Endothelial cell of umbilical vein (primary cell): ENCODE measurements at regions of chr7 and their contacts with region 1.

Region 1: GRCh38 chr7:30504347-30505173 is at the start of gene GGCT:
- DNase-seq: peak; percentile 99
- H3K4me3 ChIP-seq: peak within 1 kb of the TSS; percentile 76 to 83 (median 78)
- H3K27ac ChIP-seq: peak within 1 kb of the TSS; percentile 54
- H3K4me1 ChIP-seq: peaks cover 15% of the 10 kb centered on the region
- H3K27me3 ChIP-seq: no peaks in the 10 kb centered on the region
- CTCF ChIP-seq: no peak
- POLR2A ChIP-seq: peak; percentile 93
- total RNA-seq, gene GGCT: 44.3 and 46.9 TPM in 2 replicates

Region 2: DNA sequence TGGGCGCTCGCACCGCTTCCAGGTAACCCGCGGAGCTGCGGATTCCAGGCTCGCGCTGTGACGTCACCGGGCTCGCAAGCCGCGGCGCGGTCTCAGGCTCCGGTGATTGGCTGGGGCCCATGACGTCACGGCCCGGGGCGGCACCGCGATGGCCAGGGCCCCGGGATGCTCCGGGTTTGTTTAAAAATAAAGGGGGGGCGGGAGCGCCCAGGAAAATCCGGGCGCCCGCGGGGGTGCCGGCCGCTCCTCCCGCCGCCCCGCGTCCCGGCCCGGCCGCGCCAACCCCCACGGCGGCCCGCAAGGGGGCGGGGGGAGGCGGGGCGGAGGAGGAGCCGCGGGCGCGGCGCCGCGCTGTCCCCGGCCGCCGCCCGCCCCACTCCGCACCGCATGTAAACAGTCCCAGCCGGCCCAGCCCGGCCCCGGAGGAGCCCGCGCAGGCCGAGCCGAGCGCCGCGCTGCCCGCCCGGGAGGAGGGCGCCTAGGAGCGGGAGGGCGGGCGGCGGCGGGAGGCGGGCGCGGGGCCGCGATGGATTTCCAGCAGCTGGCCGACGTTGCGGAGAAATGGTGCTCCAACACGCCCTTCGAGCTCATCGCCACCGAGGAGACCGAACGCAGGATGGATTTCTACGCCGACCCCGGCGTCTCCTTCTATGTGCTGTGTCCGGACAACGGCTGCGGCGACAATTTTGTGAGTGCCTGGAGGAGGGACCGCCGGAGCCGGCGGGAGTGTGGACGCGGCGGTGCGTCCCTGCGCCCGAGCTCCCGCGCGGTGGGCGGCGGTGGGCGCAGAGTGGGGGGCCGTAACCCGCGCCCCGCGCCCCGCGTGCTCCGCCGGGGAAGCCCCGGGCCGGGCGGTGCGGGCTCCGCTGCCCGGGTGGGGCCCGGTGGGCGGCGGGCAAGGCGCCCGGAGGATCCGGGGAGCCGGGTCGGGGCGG is 369.7 kb before region 1 on chr7 and contains the start of gene MTURN:
- CTCF ChIA-PET with region 1: no interaction called
- POLR2A ChIA-PET with region 1: no interaction called
- dilution Hi-C with region 1: no loop called
- intact Hi-C with region 1: loop called (anchors 1 kb)
- DNase-seq: peak; percentile 75
- H3K4me3 ChIP-seq: peak within 1 kb of the TSS; percentile 59 to 83 (median 59)
- H3K27ac ChIP-seq: peak within 1 kb of the TSS; percentile 41
- H3K4me1 ChIP-seq: peaks cover 6% of the 10 kb centered on the region
- H3K27me3 ChIP-seq: peaks cover 0 to 4% of the 10 kb centered on the region in 2 experiments
- CTCF ChIP-seq: no peak
- POLR2A ChIP-seq: no peak
- total RNA-seq, gene MTURN: 4.8 and 6.6 TPM in 2 replicates

Region 3: DNA sequence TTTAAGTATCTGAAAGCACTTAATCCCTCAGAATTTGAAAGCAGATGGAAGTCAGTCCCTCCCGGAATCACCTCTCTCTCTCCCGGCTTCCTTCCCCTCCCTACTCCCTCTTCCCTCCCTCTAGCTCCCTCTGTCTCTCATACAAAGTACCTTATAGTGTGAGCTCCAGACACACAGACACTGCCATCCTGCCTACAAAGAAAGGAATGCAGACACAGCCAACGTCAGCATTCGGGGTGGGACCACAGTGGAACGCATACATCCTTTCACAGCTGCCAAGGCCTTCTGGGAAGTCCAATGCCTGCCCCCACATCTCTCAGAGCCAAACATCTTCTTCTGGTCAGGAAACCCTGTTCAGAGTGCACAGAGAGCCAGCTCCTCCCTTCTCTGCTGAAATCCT is 35.3 kb before region 1 on chr7:
- CTCF ChIA-PET with region 1: interaction called, 5 read pairs
- POLR2A ChIA-PET with region 1: no interaction called
- dilution Hi-C with region 1: no loop called
- intact Hi-C with region 1: loop called (anchors 2 kb)
- DNase-seq: peak; percentile 99
- H3K4me3 ChIP-seq: no peak overlapping the region
- H3K27ac ChIP-seq: peak overlapping the region; percentile 93
- H3K4me1 ChIP-seq: peaks cover 60% of the 10 kb centered on the region
- H3K27me3 ChIP-seq: no peaks in the 10 kb centered on the region
- CTCF ChIP-seq: peak; percentile 49 to 52
- POLR2A ChIP-seq: peak; percentile 43

Region 4: DNA sequence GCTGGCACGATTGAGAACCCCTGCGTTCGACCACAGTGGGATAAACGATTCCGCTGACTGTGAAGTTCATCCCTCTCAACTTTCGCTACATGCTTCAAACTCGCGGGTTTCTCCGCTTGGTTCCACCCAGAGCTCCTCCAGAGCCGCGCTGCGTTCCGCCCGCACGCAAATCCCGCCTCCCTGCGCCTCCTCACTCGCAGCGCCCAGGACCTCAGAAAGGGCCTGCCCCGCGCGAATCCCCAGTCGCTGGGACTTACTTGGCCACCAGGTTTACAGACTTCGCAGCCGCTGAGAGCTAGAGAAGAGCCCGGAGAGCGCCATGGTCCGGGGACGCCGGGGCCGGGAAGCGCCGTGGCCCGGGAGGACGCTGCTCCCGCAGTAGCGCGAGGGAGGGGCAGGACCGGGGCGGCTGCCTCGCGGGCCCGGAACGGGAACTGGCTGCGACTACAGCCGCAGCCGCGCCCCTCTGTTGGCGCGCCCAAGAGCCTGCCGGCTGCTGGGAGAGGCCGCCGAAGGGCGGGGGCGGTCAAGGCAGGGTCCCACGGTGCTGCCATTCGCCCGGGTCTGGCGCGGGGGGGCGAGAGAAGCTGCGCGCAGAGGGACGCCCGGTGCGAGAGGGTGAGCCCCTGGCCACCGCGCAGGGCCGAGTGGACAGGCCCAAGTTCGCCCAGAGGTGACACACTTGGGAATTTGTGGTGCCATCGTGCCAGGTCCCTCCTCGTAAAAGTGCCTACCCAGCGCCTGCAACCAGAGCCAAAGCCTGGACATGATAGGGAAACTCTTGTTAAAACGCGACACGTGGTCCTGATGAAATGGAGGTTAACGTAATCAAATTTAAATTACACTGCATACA is 26.0 kb before region 1 on chr7 and contains the start of gene NOD1:
- CTCF ChIA-PET with region 1: interaction called, 4 read pairs
- POLR2A ChIA-PET with region 1: no interaction called
- dilution Hi-C with region 1: no loop called
- intact Hi-C with region 1: loop called (anchors 1 kb)
- DNase-seq: peak; percentile 81
- H3K4me3 ChIP-seq: peak within 1 kb of the TSS; percentile 60 to 92 (median 79)
- H3K27ac ChIP-seq: peak within 1 kb of the TSS; percentile 99
- H3K4me1 ChIP-seq: peaks cover 38% of the 10 kb centered on the region
- H3K27me3 ChIP-seq: no peaks in the 10 kb centered on the region
- CTCF ChIP-seq: no peak
- POLR2A ChIP-seq: no peak
- total RNA-seq, gene NOD1: 39.2 and 39.7 TPM in 2 replicates

Region 5: DNA sequence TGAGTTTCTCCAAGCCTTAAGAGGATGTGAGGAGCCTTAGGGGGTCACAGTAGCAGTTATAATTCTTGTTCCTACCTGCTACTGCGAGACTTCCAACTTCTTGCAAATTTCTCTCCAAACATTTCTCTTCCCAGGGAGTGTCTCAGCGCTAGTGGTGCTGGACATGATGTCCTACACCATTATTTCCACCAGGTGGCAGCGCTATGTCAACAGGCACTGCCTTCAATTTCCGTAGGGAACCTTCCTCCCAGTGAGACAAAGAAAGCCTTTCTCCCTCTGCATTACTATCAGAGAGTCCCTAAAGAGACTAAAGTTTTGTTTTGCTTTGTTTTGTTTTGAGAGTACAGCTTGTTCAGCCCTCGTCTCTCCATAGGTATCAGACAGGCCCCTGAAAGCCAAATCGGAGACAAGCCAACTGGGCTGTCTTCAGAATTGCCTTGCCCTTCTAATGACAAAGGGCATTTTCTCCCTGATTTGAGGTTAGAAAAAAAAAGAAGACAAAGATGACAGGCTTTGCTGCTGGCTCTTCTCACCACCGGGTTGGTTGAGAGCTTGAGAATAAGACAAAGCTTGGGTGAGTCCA is 44.3 kb after region 1 on chr7:
- CTCF ChIA-PET with region 1: interaction called, 6 read pairs
- POLR2A ChIA-PET with region 1: interaction called, 9 read pairs
- dilution Hi-C with region 1: no loop called
- intact Hi-C with region 1: loop called (anchors 1 kb)
- DNase-seq: peak; percentile 82
- H3K4me3 ChIP-seq: no peak overlapping the region
- H3K27ac ChIP-seq: peak overlapping the region; percentile 69
- H3K4me1 ChIP-seq: peaks cover 35% of the 10 kb centered on the region
- H3K27me3 ChIP-seq: no peaks in the 10 kb centered on the region
- CTCF ChIP-seq: peak; percentile 76 to 82
- POLR2A ChIP-seq: no peak

Region 6: DNA sequence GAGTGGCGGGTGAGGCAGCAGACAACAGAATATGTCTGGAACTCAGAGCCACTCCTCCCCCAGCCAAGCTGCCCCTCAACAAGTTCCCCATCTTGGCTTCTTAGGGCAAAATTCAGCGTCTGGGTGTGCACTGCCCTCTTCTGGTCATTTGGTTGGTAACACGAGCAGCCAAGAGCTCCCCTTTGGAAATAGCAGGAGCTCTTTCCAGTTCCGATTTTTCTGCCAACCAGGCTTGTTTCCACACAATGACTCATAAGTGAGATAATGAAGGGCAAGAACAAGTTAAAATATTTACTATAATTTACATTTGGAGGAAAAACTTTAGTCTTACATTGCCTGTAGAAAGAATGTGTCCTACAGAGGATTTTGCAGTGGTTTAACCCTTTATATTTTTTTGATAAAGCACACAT is 618.1 kb after region 1 on chr7:
- CTCF ChIA-PET with region 1: no interaction called
- POLR2A ChIA-PET with region 1: no interaction called
- dilution Hi-C with region 1: no loop called
- intact Hi-C with region 1: no loop called
- DNase-seq: peak; percentile 88
- H3K4me3 ChIP-seq: no peak overlapping the region
- H3K27ac ChIP-seq: no peak overlapping the region
- H3K4me1 ChIP-seq: no peaks in the 10 kb centered on the region
- H3K27me3 ChIP-seq: peaks cover 0 to 14% of the 10 kb centered on the region in 2 experiments
- CTCF ChIP-seq: peak; percentile 81 to 85
- POLR2A ChIP-seq: no peak